Panc1 (cell line): ENCODE measurements at regions of chr19 and their contacts with region 1.

Region 1: GRCh38 chr19:29467824-29468401 is 57.9 kb upstream of the VSTM2B start:
- DNase-seq: no peak
- ATAC-seq: peak; percentile 71; the same call in 1 of the 2 replicates
- H3K4me3 ChIP-seq: no peak overlapping the region
- H3K27ac ChIP-seq: no peak overlapping the region
- H3K4me1 ChIP-seq: no peaks in the 10 kb centered on the region
- H3K27me3 ChIP-seq: peaks cover 22% of the 10 kb centered on the region
- CTCF ChIP-seq: peak; percentile 81

Region 2: GRCh38 chr19:29528350-29528945 is 60.5 kb after region 1 on chr19:
- CTCF ChIA-PET with region 1: interaction called, 7 read pairs
- POLR2A ChIA-PET with region 1: no interaction called
- in situ Hi-C with region 1: no loop called
- intact Hi-C with region 1: loop called (anchors 10 kb)
- DNase-seq: no peak
- ATAC-seq: peak; percentile 91
- H3K4me3 ChIP-seq: peak overlapping the region; percentile 23 to 30; a peak in 3 of 4 replicates
- H3K27ac ChIP-seq: no peak overlapping the region
- H3K4me1 ChIP-seq: no peaks in the 10 kb centered on the region
- H3K27me3 ChIP-seq: peaks cover 7% of the 10 kb centered on the region; the same call in 1 of the 2 replicates
- CTCF ChIP-seq: peak; percentile 100